Heart left ventricle (tissue), 16 donors: ENCODE measurements at regions of chr6 and their contacts with region 1.

Region 1: DNA sequence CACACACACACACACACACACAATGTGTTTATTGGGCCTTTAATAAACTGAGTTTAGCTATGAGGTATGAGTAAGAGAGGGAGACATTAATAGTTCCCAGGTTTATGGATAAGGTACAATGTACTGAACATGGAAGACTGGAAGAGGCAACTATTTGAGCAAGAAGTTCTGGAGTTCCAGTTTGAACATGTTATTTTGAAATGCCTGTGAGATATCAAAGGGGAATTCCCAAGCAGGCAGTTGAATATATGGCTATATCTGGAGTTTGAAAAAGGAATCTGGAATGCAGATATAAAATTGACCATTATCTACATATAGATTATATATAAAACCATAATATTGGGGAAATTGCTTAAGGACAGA is 368.1 kb downstream of the CDKAL1 start:
- DNase-seq: no peak
- ATAC-seq: no peak
- H3K4me3 ChIP-seq: no peak overlapping the region
- H3K27ac ChIP-seq: no peak overlapping the region
- H3K4me1 ChIP-seq: no peaks in the 10 kb centered on the region
- H3K27me3 ChIP-seq: no peaks in the 10 kb centered on the region
- CTCF ChIP-seq: no peak
- POLR2A ChIP-seq: no peak

Region 2: GRCh38 chr6:20826378-20826777 is 75.9 kb before region 1 on chr6:
- intact Hi-C with region 1: no loop called
- DNase-seq: no peak
- ATAC-seq: peak; percentile 32 to 68 (median 60)
- H3K4me3 ChIP-seq: no peak overlapping the region
- H3K27ac ChIP-seq: peak overlapping the region in 8 of 12 donors; percentile 7 to 76 (median 44)
- H3K4me1 ChIP-seq: peaks cover 0 to 29% (median 15%) of the 10 kb centered on the region in 12 donors
- H3K27me3 ChIP-seq: no peaks in the 10 kb centered on the region
- CTCF ChIP-seq: no peak
- POLR2A ChIP-seq: no peak

Region 3: DNA sequence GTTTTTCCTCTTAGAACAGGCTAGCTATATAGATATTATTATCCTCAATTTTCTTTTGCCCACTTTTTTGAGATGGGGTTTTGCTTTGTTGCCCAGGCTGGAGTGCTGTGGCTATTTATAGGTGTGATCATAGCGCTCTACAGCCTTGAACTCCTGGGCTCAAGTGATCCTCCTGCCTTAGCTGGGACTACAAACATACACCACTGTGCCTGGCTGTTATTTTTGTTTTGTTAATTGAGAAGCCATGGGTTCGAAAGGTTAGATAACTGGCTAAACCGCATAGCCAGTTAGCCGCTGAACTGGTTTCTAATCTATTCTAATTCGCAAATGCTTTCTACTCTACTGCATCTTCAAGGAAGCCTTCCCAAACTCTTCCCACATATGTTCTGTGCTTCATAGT is 57.7 kb after region 1 on chr6:
- intact Hi-C with region 1: loop called in 1 of 10 experiments (anchors 2 kb)
- DNase-seq: no peak
- ATAC-seq: no peak
- H3K4me3 ChIP-seq: no peak overlapping the region
- H3K27ac ChIP-seq: no peak overlapping the region
- H3K4me1 ChIP-seq: no peaks in the 10 kb centered on the region
- H3K27me3 ChIP-seq: no peaks in the 10 kb centered on the region
- CTCF ChIP-seq: no peak
- POLR2A ChIP-seq: no peak